HEK293 (cell line): ENCODE measurements at regions of chr1 and their contacts with region 1.

Region 1: GRCh38 chr1:53754484-53755312 is 15.7 kb upstream of the GLIS1 start:
- H3K4me3 ChIP-seq: no peak overlapping the region
- H3K27ac ChIP-seq: no peak overlapping the region
- H3K4me1 ChIP-seq: no peaks in the 10 kb centered on the region
- CTCF ChIP-seq: peak; percentile 52; the same call in 1 of the 2 replicates

Region 2: DNA sequence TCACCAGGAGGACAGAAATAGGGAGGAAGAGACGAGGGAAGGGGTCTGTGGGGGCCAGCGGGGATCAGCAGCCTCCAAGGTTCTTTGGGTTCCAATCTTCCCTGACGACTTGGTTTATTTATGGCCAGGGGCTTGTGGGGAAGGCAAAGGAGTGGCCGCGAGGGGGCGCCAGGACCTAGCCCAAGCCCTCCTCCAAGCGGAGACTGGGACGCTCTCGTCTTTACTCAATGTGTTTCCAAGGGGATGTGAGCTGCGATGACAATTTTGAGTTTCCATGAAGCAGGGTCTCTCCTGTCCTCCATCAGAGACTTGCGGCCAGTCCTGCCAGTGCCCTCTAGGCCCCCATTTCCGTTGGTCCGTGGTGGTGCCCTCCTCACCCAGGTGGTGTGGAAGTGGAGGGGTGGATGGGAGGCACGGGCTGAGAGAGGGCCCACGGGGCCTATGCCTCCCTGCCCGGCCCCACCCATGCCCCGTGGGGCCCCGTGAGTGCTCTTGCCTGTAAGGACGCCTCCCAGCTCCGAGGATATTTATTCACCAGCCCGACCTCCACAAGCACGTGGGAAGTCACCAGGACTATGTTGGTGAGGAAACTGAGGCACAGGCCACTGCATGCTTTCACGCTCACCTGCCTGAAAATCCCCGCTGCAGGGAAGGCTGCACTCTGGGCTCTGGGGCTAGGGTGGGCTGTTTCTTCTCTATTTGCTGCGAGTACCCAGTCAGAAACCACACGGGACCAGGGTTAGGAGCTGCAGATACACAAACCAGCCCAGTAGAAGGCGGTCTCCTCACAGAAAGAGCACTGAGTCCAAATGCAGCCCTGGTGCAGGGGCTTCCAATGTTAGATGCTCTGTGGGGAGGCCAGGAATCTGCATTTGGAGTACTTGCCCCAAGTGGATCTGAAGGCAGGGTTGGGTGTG is 269.0 kb before region 1 on chr1:
- CTCF ChIA-PET with region 1: interaction called, 26 read pairs
- POLR2A ChIA-PET with region 1: no interaction called
- H3K4me3 ChIP-seq: no peak overlapping the region
- H3K27ac ChIP-seq: no peak overlapping the region
- H3K4me1 ChIP-seq: no peaks in the 10 kb centered on the region
- CTCF ChIP-seq: peak; percentile 85

Region 3: GRCh38 chr1:53715478-53715877 is 39.2 kb before region 1 on chr1:
- CTCF ChIA-PET with region 1: interaction called, 13 read pairs
- POLR2A ChIA-PET with region 1: no interaction called
- H3K4me3 ChIP-seq: no peak overlapping the region
- H3K27ac ChIP-seq: no peak overlapping the region
- H3K4me1 ChIP-seq: no peaks in the 10 kb centered on the region
- CTCF ChIP-seq: peak; percentile 90